ENCODE measurements at regions of chr1 and their contacts with region 1.

Region 1: GRCh38 chr1:118247593-118247992 is 62.6 kb upstream of the SPAG17 start:
- DNase-seq: peak; percentile 7
- ATAC-seq: peak; percentile 85
- H3K4me3 ChIP-seq: no peak overlapping the region
- H3K27ac ChIP-seq: no peak overlapping the region
- H3K4me1 ChIP-seq: no peaks in the 10 kb centered on the region
- H3K27me3 ChIP-seq: no peaks in the 10 kb centered on the region
- CTCF ChIP-seq: peak; percentile 57
- EP300 ChIP-seq: no peak
- POLR2A ChIP-seq: no peak
- RAD21 ChIP-seq: no peak

Region 2: DNA sequence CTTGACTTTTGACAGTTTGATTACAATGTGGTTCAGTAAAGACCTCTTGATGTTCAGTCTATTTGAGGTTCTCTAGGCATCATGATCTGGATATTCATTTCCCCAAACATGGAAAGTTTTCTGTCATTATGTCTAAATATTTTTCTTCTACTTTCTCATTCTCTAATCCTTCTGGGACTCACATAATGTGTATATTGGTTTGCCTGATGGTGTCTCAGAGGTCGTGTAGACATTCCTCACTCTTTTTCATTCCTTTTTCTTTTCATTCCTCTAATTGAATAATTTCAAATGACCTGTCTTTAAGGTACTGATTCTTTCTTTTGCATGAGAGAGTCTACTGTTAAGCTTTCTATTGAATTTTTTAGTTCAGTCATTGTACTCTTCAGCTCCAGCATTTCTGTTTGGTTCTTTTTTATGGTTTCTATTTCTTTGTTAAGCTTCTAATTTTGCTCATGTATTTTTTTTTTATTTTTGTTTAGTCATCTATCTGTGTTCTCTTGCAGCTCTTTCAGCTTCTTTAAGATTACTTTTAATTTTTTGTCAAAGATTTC is 476.5 kb before region 1 on chr1:
- CTCF ChIA-PET with region 1: no interaction called
- POLR2A ChIA-PET with region 1: no interaction called
- in situ Hi-C with region 1: no loop called
- intact Hi-C with region 1: no loop called
- DNase-seq: no peak
- ATAC-seq: no peak
- H3K4me3 ChIP-seq: no peak overlapping the region
- H3K27ac ChIP-seq: no peak overlapping the region
- H3K4me1 ChIP-seq: no peaks in the 10 kb centered on the region
- H3K27me3 ChIP-seq: no peaks in the 10 kb centered on the region
- CTCF ChIP-seq: no peak
- EP300 ChIP-seq: no peak
- POLR2A ChIP-seq: no peak
- RAD21 ChIP-seq: no peak

Region 3: DNA sequence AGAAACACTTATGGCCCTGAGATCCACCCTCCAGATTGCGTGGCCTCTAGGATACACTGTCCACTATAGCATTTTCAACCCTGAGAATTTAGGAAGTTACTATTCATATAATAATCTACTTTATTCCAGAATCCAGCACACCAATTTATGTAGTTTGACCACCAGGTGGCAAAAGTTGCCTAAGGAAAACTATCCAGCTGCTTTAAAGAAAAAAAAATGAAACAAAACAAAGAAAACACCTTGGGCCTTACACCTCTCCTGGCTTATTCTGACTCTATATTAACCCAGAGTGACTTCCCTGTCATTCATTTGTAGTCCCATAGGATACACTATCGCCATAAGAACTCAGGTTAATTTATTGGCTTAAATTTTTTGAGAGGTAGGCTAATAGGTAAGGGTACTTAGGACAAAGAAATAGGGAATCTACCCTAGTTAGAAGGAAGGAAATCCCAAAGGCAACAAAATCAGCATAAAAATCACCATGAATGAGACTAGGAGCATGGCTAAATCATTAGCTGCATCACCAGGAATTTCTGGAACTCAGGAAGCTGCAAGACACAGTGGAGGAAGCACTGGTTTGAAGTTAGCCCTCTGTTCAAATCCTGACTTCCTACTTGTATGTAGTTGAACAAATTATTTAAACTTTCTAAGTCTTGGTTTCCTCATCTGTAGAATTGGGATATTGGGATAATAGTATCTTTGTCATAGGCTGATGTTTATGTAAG is 170.1 kb before region 1 on chr1:
- CTCF ChIA-PET with region 1: interaction called, 4 read pairs
- POLR2A ChIA-PET with region 1: no interaction called
- in situ Hi-C with region 1: no loop called
- intact Hi-C with region 1: loop called (anchors 2 kb)
- DNase-seq: peak; percentile 15
- ATAC-seq: no peak; the same call in 2 of the 3 replicates
- H3K4me3 ChIP-seq: no peak overlapping the region
- H3K27ac ChIP-seq: no peak overlapping the region
- H3K4me1 ChIP-seq: no peaks in the 10 kb centered on the region
- H3K27me3 ChIP-seq: no peaks in the 10 kb centered on the region
- CTCF ChIP-seq: peak; percentile 39; the same call in 1 of the 2 replicates
- EP300 ChIP-seq: no peak
- POLR2A ChIP-seq: no peak
- RAD21 ChIP-seq: no peak

Region 4: DNA sequence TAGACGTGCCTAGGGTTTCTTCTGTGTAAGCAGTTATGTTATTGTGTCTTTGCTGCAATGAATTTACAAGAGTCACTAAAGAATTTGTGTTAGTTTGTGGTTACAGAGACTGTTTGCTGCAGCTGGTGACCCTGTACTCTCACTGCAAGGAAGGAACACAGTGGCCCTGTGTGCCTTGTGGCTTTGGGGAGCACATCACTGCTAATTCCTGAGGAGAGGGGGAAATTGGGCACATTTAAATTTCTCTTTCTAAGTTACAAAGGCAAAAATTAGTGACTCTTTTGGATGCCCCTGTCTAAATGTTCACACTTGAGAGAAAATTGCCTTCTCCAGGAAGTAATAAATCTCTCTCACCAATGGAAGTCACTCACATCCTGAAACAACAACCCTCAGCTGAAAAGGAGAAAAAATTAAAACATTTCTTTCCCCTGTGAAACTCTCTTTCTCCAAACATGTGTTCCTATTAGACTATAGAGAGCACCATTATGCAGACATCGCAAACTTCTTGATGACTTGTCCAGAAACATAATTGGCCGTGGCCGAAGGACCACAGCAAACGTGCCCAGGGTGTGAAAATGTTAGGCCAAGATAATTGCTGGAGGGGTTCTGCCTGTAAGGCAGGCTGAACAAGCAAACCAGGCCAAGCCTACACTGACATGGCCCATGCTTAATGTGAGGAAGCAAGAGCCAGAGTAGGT is 30.3 kb before region 1 on chr1:
- CTCF ChIA-PET with region 1: no interaction called
- POLR2A ChIA-PET with region 1: no interaction called
- in situ Hi-C with region 1: no loop called
- intact Hi-C with region 1: no loop called
- DNase-seq: no peak
- ATAC-seq: no peak
- H3K4me3 ChIP-seq: no peak overlapping the region
- H3K27ac ChIP-seq: no peak overlapping the region
- H3K4me1 ChIP-seq: no peaks in the 10 kb centered on the region
- H3K27me3 ChIP-seq: no peaks in the 10 kb centered on the region
- CTCF ChIP-seq: no peak
- EP300 ChIP-seq: no peak
- POLR2A ChIP-seq: no peak
- RAD21 ChIP-seq: no peak